Dorsolateral prefrontal cortex (tissue), 120 donors: ENCODE measurements at regions of chr16 and their contacts with region 1.

Region 1: GRCh38 chr16:18932243-18932981 is 6.2 kb upstream of the SMG1 start:
- DNase-seq: peak in 2 of 10 donors; percentile 8 to 77
- H3K4me3 ChIP-seq: no peak overlapping the region
- H3K27ac ChIP-seq: peak overlapping the region in 4 of 59 donors; percentile 10 to 86 (median 36)
- H3K27me3 ChIP-seq: no peaks in the 10 kb centered on the region
- CTCF ChIP-seq: no peak

Region 2: GRCh38 chr16:18846416-18846815 is 86.0 kb before region 1 on chr16:
- intact Hi-C with region 1: no loop called
- DNase-seq: no peak
- H3K4me3 ChIP-seq: no peak overlapping the region
- H3K27ac ChIP-seq: peak overlapping the region in 2 of 59 donors; percentile 15 to 38
- H3K27me3 ChIP-seq: no peaks in the 10 kb centered on the region
- CTCF ChIP-seq: no peak

Region 3: DNA sequence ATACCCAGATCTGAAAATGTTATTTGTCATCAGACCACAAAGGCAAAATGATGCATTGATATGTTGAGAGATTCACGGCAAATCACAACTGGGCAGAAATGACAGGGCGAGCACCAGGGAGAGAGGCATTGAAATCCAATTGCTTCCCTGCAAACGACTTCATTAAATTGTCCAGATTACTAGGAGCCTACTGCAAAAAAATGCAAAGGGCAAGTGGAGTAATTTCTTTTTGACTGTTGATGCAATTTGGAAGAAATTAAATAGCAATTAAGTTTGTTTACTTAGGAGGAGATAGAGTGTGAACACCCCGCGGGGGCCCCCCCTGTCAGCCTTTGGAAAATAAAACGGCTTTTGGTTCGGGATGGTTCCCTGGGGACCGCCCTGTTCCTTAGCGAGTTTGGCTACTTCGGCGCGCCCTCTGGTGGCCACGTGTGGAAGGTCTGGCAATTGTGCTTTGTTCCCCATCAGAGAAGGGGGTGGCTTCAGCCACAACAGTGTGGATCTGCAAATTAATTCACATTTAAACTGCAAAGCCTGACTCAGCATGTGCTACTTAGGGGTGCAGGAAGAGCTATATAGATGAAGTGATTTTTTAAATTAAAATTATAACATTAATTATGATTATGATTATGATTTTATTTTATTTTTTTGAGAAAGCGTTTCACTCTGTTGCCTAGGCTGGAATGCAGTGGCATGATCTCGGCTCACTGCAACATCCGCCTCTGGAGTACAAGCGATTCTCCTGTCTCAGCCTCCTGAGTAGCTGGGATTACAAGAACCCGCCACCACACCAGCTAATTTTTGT is 36.8 kb after region 1 on chr16:
- intact Hi-C with region 1: loop called in 1 of 2 experiments (anchors 2 kb)
- DNase-seq: peak; percentile 81 to 95 (median 92)
- H3K4me3 ChIP-seq: peak overlapping the region in 58 of 59 donors; percentile 19 to 70 (median 48)
- H3K27ac ChIP-seq: peak overlapping the region in 29 of 59 donors; percentile 2 to 82 (median 46)
- H3K27me3 ChIP-seq: no peaks in the 10 kb centered on the region
- CTCF ChIP-seq: peak; percentile 89 to 99 (median 97)